Sciatic nerve (tissue), 2 donors: ENCODE measurements at regions of chr3 and their contacts with region 1.

Region 1: GRCh38 chr3:193522473-193522872 is 32.2 kb downstream of the ATP13A4 start:
- DNase-seq: no peak
- ATAC-seq: no peak

Region 2: GRCh38 chr3:193554811-193555210 is 32.3 kb after region 1 on chr3 and contains the start of gene ATP13A4:
- intact Hi-C with region 1: loop called (anchors 1 kb)
- DNase-seq: no peak
- ATAC-seq: no peak
- total RNA-seq, gene ATP13A4: 1.2 TPM